Heart left ventricle (tissue), 16 donors: ENCODE measurements at regions of chr17 and their contacts with region 1.

Region 1: GRCh38 chr17:20226814-20227482 is 217.8 kb downstream of the SPECC1 start:
- DNase-seq: peak; percentile 76 to 89 (median 83)
- ATAC-seq: peak; percentile 83 to 98 (median 96)
- H3K4me3 ChIP-seq: no peak overlapping the region
- H3K27ac ChIP-seq: no peak overlapping the region
- H3K4me1 ChIP-seq: peaks cover 0 to 14% (median 0%) of the 10 kb centered on the region in 12 donors
- H3K27me3 ChIP-seq: no peaks in the 10 kb centered on the region
- CTCF ChIP-seq: peak; percentile 64 to 84 (median 78)
- POLR2A ChIP-seq: no peak

Region 2: DNA sequence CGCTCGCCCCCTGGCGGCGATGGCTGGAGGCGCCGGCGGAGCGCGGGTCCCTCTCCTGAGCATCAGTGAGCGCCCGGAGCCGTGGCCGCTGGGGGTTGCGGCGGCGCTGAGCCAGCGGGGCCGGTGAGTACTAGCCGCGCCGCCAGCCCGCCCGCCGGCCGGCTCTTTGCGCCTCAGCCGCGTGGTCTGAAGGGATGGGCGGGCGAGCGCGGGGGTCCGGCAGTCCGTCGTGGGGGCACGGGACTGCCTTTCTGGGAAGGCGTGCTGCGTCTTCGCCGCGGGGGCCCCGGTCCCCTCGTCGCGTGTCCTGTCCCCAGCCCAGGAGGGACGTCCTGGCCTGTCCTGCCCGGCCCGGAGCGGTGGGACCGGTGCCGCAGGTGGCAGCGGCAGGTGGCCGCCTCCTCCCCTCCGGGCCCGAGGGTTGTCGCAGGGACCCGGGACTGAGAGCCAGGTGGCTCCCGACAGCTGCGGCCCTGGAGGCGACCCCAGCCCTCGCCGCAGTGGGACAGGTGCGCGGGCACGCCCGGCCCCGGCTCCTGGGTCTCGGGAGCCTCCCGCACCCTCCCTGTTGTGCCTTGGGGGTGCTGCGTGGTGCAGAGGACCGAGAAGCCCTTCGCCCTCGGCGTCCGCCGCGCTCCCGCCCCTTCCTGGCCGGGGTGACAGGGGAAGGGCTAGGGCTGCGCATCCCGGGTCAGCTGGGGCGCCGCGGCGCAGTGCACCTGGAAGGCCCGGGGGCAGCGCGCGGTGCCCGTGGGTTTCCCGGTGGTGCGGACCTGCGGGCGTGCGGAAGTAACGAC is 217.4 kb before region 1 on chr17 and contains the start of gene SPECC1:
- intact Hi-C with region 1: loop called in 1 of 10 experiments (anchors 5 kb)
- DNase-seq: peak; percentile 79 to 93 (median 85)
- ATAC-seq: peak in 3 of 4 donors; percentile 45 to 98 (median 97)
- H3K4me3 ChIP-seq: peak within 1 kb of the TSS; percentile 52 to 86 (median 76)
- H3K27ac ChIP-seq: peak within 1 kb of the TSS; percentile 50 to 90 (median 76)
- H3K4me1 ChIP-seq: peaks cover 0 to 20% (median 5%) of the 10 kb centered on the region in 12 donors
- H3K27me3 ChIP-seq: peaks cover 0 to 13% (median 0%) of the 10 kb centered on the region in 9 donors
- CTCF ChIP-seq: peak; percentile 90 to 100 (median 98)
- POLR2A ChIP-seq: peak in 1 of 2 donors; percentile 44
- total RNA-seq, gene SPECC1: 5.1 to 18.4 (median 10.6) TPM

Region 3: GRCh38 chr17:20171741-20172365 is 55.1 kb before region 1 on chr17:
- intact Hi-C with region 1: loop called in 1 of 10 experiments (anchors 2 kb)
- DNase-seq: no peak
- ATAC-seq: no peak
- H3K4me3 ChIP-seq: no peak overlapping the region
- H3K27ac ChIP-seq: no peak overlapping the region
- H3K4me1 ChIP-seq: peaks cover 0 to 10% (median 0%) of the 10 kb centered on the region in 12 donors
- H3K27me3 ChIP-seq: no peaks in the 10 kb centered on the region
- CTCF ChIP-seq: no peak
- POLR2A ChIP-seq: no peak

Region 4: DNA sequence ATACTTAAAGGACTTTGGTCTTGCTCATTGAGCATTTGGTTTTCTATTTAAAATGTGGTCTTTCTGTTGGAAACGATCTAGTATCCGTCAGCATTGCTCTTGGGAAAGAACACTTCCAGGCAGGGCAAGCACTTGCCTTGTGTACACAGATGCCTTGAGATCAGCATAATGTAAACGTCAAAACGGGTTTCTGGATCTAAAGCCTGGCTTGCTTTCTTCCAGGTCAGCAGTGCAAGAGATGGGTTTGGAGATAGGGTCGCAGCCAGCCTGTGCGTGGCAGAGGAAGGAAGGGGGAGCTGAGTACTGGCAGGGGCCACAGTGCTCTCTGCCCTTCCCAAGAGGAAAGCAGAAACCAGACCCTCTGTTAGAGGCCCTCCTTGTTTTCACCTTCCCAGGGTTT is 64.9 kb after region 1 on chr17:
- intact Hi-C with region 1: no loop called
- DNase-seq: no peak
- ATAC-seq: no peak
- H3K4me3 ChIP-seq: no peak overlapping the region
- H3K27ac ChIP-seq: no peak overlapping the region
- H3K4me1 ChIP-seq: no peaks in the 10 kb centered on the region
- H3K27me3 ChIP-seq: no peaks in the 10 kb centered on the region
- CTCF ChIP-seq: no peak
- POLR2A ChIP-seq: no peak

Region 5: GRCh38 chr17:20852239-20852989 is 625.5 kb after region 1 on chr17:
- intact Hi-C with region 1: loop called in 1 of 10 experiments (anchors 5 kb)
- DNase-seq: peak in 4 of 5 donors; percentile 21 to 39 (median 30)
- ATAC-seq: peak in 3 of 4 donors; percentile 45 to 85 (median 80)
- H3K4me3 ChIP-seq: peak overlapping the region in 10 of 12 donors; percentile 7 to 51 (median 34)
- H3K27ac ChIP-seq: peak overlapping the region in 1 of 12 donors; percentile 24
- H3K4me1 ChIP-seq: peaks cover 0 to 14% (median 0%) of the 10 kb centered on the region in 12 donors
- H3K27me3 ChIP-seq: peaks cover 0 to 55% (median 32%) of the 10 kb centered on the region in 9 donors
- CTCF ChIP-seq: no peak
- POLR2A ChIP-seq: no peak